ENCODE measurements at regions of chr21 and their contacts with region 1.

Region 1: DNA sequence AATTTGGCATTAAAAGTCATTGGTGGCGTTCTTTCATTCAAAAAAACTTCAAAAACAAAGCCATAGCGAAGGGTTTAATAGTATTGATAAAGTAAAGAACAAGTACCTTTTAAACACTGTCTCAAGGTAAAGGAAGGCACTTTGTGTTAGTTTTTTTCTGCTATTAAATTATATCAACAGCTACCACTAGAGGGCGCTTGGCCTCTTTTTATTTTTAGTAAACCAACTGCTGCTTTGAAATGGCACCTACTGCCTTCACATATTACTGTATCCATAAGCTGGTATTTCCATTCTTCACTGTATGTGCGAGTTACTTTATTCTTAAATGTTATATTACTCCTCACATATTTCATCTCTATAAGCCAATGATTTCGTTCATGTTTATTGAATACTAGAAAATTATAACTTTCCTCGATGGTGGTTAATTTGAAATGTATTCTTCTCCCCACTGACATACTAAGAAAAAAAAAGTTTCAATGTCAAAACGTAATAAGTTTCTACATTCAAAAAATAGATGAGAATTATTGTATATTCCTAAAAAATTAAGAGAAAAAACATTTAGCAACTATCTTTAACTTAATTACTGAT is 125.7 kb upstream of the CXADR start:
- DNase-seq: no peak
- ATAC-seq: peak; percentile 67

Region 2: GRCh38 chr21:17343055-17343454 is 44.1 kb before region 1 on chr21:
- intact Hi-C with region 1: no loop called
- DNase-seq: no peak
- ATAC-seq: no peak

Region 3: GRCh38 chr21:17580319-17580718 is 193.2 kb after region 1 on chr21:
- intact Hi-C with region 1: loop called (anchors 5 kb)
- DNase-seq: no peak
- ATAC-seq: no peak

Region 4: GRCh38 chr21:17631195-17631594 is 244.1 kb after region 1 on chr21:
- intact Hi-C with region 1: no loop called
- DNase-seq: no peak
- ATAC-seq: peak; percentile 27

Region 5: GRCh38 chr21:17660449-17660848 is 273.3 kb after region 1 on chr21:
- intact Hi-C with region 1: no loop called
- DNase-seq: no peak
- ATAC-seq: no peak